Dendritic cell treated with granulocyte-macrophage colony-stimulating factor and Interleukin-4, amounts not matched to agents 40 ng/mL and 50 ng/mL, for 4 days (primary cell): ENCODE measurements at regions of chr5 and their contacts with region 1.

Region 1: GRCh38 chr5:80083101-80083890 is 48.1 kb downstream of the THBS4 start:
- H3K4me3 Mint-ChIP-seq: peak overlapping the region; percentile 66
- H3K27ac Mint-ChIP-seq: no peak overlapping the region
- H3K4me1 Mint-ChIP-seq: peaks cover 6% of the 10 kb centered on the region
- H3K27me3 Mint-ChIP-seq: no peaks in the 10 kb centered on the region

Region 2: DNA sequence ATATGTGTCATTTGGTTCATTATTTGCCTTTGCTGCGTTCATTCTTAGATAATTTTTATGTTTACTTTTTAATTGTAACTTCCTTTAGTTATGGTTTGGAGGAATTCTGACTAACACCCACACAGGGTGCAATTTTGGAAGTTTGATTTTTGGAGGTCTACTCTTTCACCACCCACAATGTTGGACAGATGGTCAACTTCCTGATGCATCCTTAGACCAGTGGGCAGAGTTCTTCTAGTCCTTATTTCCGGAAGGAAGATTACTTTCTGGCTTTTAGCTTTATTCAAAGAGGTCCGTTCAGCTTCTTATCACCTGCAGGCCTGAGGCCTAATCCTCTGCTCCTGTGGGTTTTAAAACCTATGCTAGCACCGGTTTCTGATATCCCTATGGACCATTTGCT is 218.9 kb before region 1 on chr5:
- intact Hi-C with region 1: loop called (anchors 5 kb)
- H3K4me3 Mint-ChIP-seq: no peak overlapping the region
- H3K27ac Mint-ChIP-seq: no peak overlapping the region
- H3K4me1 Mint-ChIP-seq: no peaks in the 10 kb centered on the region
- H3K27me3 Mint-ChIP-seq: peaks cover 10% of the 10 kb centered on the region

Region 3: GRCh38 chr5:79878721-79879336 is 204.5 kb before region 1 on chr5:
- intact Hi-C with region 1: loop called (anchors 1 kb)
- H3K4me3 Mint-ChIP-seq: no peak overlapping the region
- H3K27ac Mint-ChIP-seq: no peak overlapping the region
- H3K4me1 Mint-ChIP-seq: no peaks in the 10 kb centered on the region
- H3K27me3 Mint-ChIP-seq: peaks cover 4% of the 10 kb centered on the region

Region 4: GRCh38 chr5:80172067-80172695 is 88.9 kb after region 1 on chr5:
- intact Hi-C with region 1: no loop called
- H3K4me3 Mint-ChIP-seq: no peak overlapping the region
- H3K27ac Mint-ChIP-seq: no peak overlapping the region
- H3K4me1 Mint-ChIP-seq: peaks cover 38% of the 10 kb centered on the region
- H3K27me3 Mint-ChIP-seq: no peaks in the 10 kb centered on the region